A549 (cell line): ENCODE measurements at regions of chr1 and their contacts with region 1.

Region 1: GRCh38 chr1:208132287-208132883 is 111.8 kb downstream of the PLXNA2 start:
- DNase-seq: peak; percentile 78 to 95
- ATAC-seq: peak; percentile 98 to 100
- H3K4me3 ChIP-seq: no peak overlapping the region
- H3K27ac ChIP-seq: peak overlapping the region in 1 of 2 experiments; percentile 33; a peak in 1 of 6 replicates
- H3K4me1 ChIP-seq: peaks cover 10% of the 10 kb centered on the region; the same call in 2 of the 3 replicates
- CTCF ChIP-seq: peak; percentile 90
- EP300 ChIP-seq: no peak
- POLR2A ChIP-seq: no peak
- RAD21 ChIP-seq: peak; percentile 68 to 75

Region 2: GRCh38 chr1:208110296-208110695 is 22.1 kb before region 1 on chr1:
- CTCF ChIA-PET with region 1: interaction called, 16 read pairs
- POLR2A ChIA-PET with region 1: no interaction called
- DNase-seq: no peak
- ATAC-seq: no peak
- H3K4me3 ChIP-seq: no peak overlapping the region
- H3K27ac ChIP-seq: no peak overlapping the region
- H3K4me1 ChIP-seq: peaks cover 13% of the 10 kb centered on the region
- CTCF ChIP-seq: no peak
- EP300 ChIP-seq: no peak
- POLR2A ChIP-seq: no peak
- RAD21 ChIP-seq: no peak

Region 3: GRCh38 chr1:208149776-208150514 is 17.6 kb after region 1 on chr1:
- CTCF ChIA-PET with region 1: interaction called, 15 read pairs
- POLR2A ChIA-PET with region 1: no interaction called
- DNase-seq: peak in 1 of 2 experiments; percentile 6
- ATAC-seq: peak in 1 of 2 experiments; percentile 62; a peak in 2 of 6 replicates
- H3K4me3 ChIP-seq: no peak overlapping the region
- H3K27ac ChIP-seq: no peak overlapping the region
- H3K4me1 ChIP-seq: 0 out of 3 replicates have a peak, but pooled peaks cover 8% of the 10 kb centered on the region
- CTCF ChIP-seq: no peak
- EP300 ChIP-seq: no peak
- POLR2A ChIP-seq: no peak
- RAD21 ChIP-seq: no peak

Region 4: GRCh38 chr1:208184088-208184911 is 51.9 kb after region 1 on chr1:
- CTCF ChIA-PET with region 1: interaction called, 20 read pairs
- POLR2A ChIA-PET with region 1: interaction called, 4 read pairs
- DNase-seq: peak; percentile 92 to 95
- ATAC-seq: peak; percentile 96 to 98
- H3K4me3 ChIP-seq: no peak overlapping the region
- H3K27ac ChIP-seq: peak overlapping the region; percentile 66 to 81
- H3K4me1 ChIP-seq: peaks cover 60% of the 10 kb centered on the region
- CTCF ChIP-seq: no peak
- EP300 ChIP-seq: peak; percentile 69 to 79; a peak in 3 of 5 replicates
- POLR2A ChIP-seq: no peak
- RAD21 ChIP-seq: peak in 1 of 2 experiments; percentile 14; a peak in 3 of 5 replicates

Region 5: GRCh38 chr1:208251911-208252835 is 119.8 kb after region 1 on chr1:
- CTCF ChIA-PET with region 1: interaction called, 12 read pairs
- POLR2A ChIA-PET with region 1: no interaction called
- DNase-seq: peak; percentile 50 to 85
- ATAC-seq: peak; percentile 83 to 93
- H3K4me3 ChIP-seq: no peak overlapping the region
- H3K27ac ChIP-seq: no peak overlapping the region
- H3K4me1 ChIP-seq: peaks cover 4% of the 10 kb centered on the region; the same call in 1 of the 3 replicates
- CTCF ChIP-seq: peak; percentile 62
- EP300 ChIP-seq: no peak
- POLR2A ChIP-seq: no peak
- RAD21 ChIP-seq: peak; percentile 71 to 75